Sigmoid colon (tissue), 7 donors: ENCODE measurements at regions of chr15 and their contacts with region 1.

Region 1: DNA sequence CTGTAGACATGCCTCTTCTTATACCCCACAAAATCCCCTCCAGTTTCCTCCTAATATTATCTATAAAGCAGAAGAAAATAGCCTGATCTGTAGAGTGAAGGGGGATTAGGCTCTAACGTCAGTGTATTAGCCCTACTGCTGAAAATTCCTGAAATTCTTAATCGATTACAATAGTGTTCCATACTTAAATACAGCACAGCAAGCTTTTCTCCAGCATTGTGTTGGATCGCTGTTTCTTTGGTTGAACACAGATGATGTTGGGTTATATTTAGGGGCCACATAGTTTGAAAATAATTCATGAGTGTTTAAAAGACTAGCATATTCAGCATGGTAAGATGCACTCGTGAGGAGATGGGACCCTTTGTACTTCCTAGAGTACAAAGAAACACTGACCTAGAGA is 52.5 kb downstream of the PIAS1 start:
- DNase-seq: no peak
- H3K4me3 ChIP-seq: no peak overlapping the region
- H3K27ac ChIP-seq: peak overlapping the region in 1 of 4 donors; percentile 12
- H3K4me1 ChIP-seq: peaks cover 0 to 35% (median 22%) of the 10 kb centered on the region in 4 donors
- H3K27me3 ChIP-seq: no peaks in the 10 kb centered on the region
- CTCF ChIP-seq: no peak
- EP300 ChIP-seq: no peak
- POLR2A ChIP-seq: no peak

Region 2: DNA sequence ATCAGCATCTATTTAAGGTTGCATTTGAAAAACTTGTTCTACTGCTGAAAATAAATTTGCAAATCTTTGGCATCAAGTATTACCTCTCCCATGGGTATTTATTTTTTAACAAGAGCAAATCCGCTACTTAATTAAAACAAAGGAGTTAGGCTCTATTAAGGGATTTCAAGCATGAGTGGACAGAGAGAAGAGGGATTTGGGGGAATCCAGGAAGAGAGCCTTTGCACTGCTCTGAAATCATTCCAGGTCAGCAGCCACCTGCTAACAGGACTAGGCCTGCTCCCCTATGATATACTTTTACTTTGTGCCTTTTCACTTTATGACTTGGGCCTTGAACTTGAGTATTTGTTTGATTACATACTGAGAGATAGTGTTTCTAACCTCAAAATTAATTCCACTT is 794.9 kb before region 1 on chr15:
- intact Hi-C with region 1: no loop called
- DNase-seq: no peak
- H3K4me3 ChIP-seq: no peak overlapping the region
- H3K27ac ChIP-seq: no peak overlapping the region
- H3K4me1 ChIP-seq: peaks cover 0 to 12% (median 5%) of the 10 kb centered on the region in 4 donors
- H3K27me3 ChIP-seq: no peaks in the 10 kb centered on the region
- CTCF ChIP-seq: no peak
- EP300 ChIP-seq: no peak
- POLR2A ChIP-seq: no peak

Region 3: DNA sequence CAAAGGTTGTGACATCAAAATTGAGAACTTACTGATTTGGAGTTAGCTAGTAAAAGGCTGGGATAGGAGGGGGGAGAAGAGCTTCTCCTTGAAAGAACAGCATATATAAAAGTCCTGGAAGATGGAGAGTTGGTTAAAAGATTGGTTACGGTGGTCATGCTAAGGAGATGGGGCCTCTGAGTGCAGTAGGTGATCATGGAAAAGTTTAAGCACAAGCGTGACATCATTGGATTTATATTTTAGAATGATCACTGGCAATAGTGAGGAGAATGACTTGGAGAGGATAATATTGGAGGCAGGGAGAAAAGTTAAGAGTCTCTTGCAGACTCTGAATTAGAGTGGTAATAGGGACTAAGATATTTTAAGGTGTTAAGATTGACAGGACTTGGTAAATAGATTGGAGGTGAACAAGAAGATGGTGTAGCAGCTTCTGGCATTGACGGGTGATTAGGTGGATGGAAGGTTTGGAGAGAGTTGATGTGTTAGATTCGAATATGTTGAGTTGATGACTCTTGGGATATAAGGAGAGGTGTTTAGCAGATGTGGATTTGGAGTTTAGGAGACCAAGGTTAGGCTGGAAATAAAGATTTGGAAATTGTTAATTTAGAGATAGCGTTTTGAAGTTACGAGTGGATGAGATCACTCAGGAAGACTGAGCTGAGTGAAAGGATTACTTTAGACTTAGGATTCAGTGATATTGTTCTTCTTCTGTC is 32.9 kb before region 1 on chr15:
- intact Hi-C with region 1: loop called (anchors 5 kb)
- DNase-seq: no peak
- H3K4me3 ChIP-seq: no peak overlapping the region
- H3K27ac ChIP-seq: no peak overlapping the region
- H3K4me1 ChIP-seq: peaks cover 0 to 38% (median 32%) of the 10 kb centered on the region in 4 donors
- H3K27me3 ChIP-seq: no peaks in the 10 kb centered on the region
- CTCF ChIP-seq: no peak
- EP300 ChIP-seq: no peak
- POLR2A ChIP-seq: no peak

Region 4: GRCh38 chr15:68126396-68126795 is 19.7 kb after region 1 on chr15:
- intact Hi-C with region 1: no loop called
- DNase-seq: peak; percentile 62
- H3K4me3 ChIP-seq: no peak overlapping the region
- H3K27ac ChIP-seq: peak overlapping the region in 2 of 4 donors; percentile 3 to 16
- H3K4me1 ChIP-seq: peaks cover 0 to 27% (median 13%) of the 10 kb centered on the region in 4 donors
- H3K27me3 ChIP-seq: no peaks in the 10 kb centered on the region
- CTCF ChIP-seq: no peak
- EP300 ChIP-seq: no peak
- POLR2A ChIP-seq: no peak